PC-9 (cell line): ENCODE measurements at regions of chr1 and their contacts with region 1.

Region 1: GRCh38 chr1:235246022-235246991 is 81.7 kb downstream of the ARID4B start:
- DNase-seq: peak in 1 of 2 experiments; percentile 53
- H3K4me3 ChIP-seq: no peak overlapping the region
- H3K27ac ChIP-seq: no peak overlapping the region
- H3K4me1 ChIP-seq: peaks cover 15% of the 10 kb centered on the region
- H3K27me3 ChIP-seq: no peaks in the 10 kb centered on the region
- CTCF ChIP-seq: no peak

Region 2: DNA sequence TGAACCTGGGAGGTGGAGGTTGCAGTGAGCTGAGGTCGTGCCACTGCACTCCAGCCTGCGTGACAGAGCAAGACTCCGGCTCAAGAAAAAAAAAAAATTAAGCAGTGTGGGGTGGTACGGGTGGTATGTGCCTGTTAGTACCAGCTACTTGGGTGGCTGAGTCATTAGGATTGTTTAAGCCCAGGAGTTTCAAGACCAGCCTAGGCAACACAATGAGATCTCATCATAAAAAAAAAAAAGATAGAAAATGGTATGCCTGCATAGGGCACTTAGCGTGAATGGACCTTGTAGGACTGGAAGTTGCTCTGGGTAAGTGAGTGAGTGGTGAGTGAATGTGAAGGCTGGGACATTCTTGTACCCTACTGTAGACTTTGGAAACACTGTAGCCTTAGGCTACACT is 157.9 kb after region 1 on chr1:
- CTCF ChIA-PET with region 1: no interaction called
- POLR2A ChIA-PET with region 1: interaction called, 19 read pairs
- intact Hi-C with region 1: no loop called
- DNase-seq: peak; percentile 58 to 77
- H3K4me3 ChIP-seq: no peak overlapping the region
- H3K27ac ChIP-seq: peak overlapping the region; percentile 39; the same call in 1 of the 2 replicates
- H3K4me1 ChIP-seq: peaks cover 40% of the 10 kb centered on the region
- H3K27me3 ChIP-seq: no peaks in the 10 kb centered on the region
- CTCF ChIP-seq: no peak